ENCODE measurements at regions of chr17 and their contacts with region 1.

Region 1: DNA sequence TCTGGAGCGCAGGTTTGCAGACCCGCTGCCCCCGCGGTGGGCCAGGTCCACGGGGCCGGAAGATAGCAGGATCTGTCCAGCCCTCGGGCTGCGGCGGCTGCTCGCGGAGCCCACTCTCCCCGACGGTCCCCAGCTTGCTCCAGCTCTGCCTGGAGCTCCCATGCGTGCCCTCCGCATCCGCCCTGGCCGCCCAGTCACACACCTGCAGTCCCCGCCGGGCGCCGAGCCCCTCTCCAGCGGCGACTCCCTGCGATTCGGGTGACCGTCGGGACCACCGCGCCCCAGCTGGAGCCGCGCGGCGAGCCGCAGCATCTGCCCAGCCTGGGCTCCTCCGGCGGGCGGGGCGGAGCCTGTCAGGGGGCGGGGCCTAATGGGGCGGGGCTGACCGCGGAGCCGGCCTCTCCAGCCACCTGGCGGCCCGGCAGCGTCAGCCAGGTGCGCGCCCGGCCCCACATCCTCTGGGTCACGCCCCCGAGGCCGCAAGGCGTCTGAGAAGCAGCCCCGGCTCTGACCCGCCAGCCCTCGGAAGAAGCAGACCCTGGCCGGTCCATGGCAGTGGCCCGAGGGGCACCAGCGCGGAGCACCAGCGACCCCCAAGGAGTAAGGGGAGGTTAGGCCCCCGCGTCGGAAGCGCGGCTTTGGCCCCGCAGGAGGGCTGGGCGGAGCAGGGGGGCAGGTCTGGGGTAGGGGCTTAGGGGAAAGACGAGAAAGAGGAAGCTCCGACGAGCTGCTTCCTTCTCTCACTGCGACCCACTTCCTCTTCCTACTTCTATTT is at the start of gene PIK3R5:
- DNase-seq: peak; percentile 24 to 63
- ATAC-seq: peak; percentile 62 to 90 (median 78)
- H3K4me3 ChIP-seq: peak within 1 kb of the TSS in 9 of 10 donors; percentile 2 to 83 (median 41)
- H3K27ac ChIP-seq: peak within 1 kb of the TSS in 8 of 10 donors; percentile 35 to 98 (median 62)
- H3K4me1 ChIP-seq: peaks cover 0 to 38% (median 0%) of the 10 kb centered on the region in 9 donors
- H3K27me3 ChIP-seq: peaks cover 8 to 75% (median 53%) of the 10 kb centered on the region in 7 donors
- CTCF ChIP-seq: peak in 1 of 9 donors; percentile 13
- total RNA-seq, gene PIK3R5: 0.66 to 10.1 (median 2.4) TPM

Region 2: GRCh38 chr17:8900626-8901585 is 64.7 kb before region 1 on chr17:
- intact Hi-C with region 1: loop called in 1 of 10 experiments (anchors 10 kb)
- DNase-seq: no peak
- ATAC-seq: no peak
- H3K4me3 ChIP-seq: no peak overlapping the region
- H3K27ac ChIP-seq: peak overlapping the region in 1 of 10 donors; percentile 51
- H3K4me1 ChIP-seq: peaks cover 0 to 39% (median 0%) of the 10 kb centered on the region in 9 donors
- H3K27me3 ChIP-seq: peaks cover 0 to 37% (median 7%) of the 10 kb centered on the region in 7 donors
- CTCF ChIP-seq: no peak

Region 3: GRCh38 chr17:9009737-9010136 is 44.2 kb after region 1 on chr17:
- intact Hi-C with region 1: no loop called
- DNase-seq: no peak
- ATAC-seq: peak in 1 of 8 donors; percentile 56
- H3K4me3 ChIP-seq: no peak overlapping the region
- H3K27ac ChIP-seq: no peak overlapping the region
- H3K4me1 ChIP-seq: no peaks in the 10 kb centered on the region
- H3K27me3 ChIP-seq: peaks cover under 1 to 62% (median 54%) of the 10 kb centered on the region in 7 donors
- CTCF ChIP-seq: no peak

Region 4: GRCh38 chr17:10729334-10730193 is 1764.0 kb after region 1 on chr17 and contains the start of gene TMEM220:
- intact Hi-C with region 1: no loop called
- DNase-seq: peak; percentile 73 to 86
- ATAC-seq: peak; percentile 96 to 98 (median 97)
- H3K4me3 ChIP-seq: peak within 1 kb of the TSS; percentile 65 to 88 (median 77)
- H3K27ac ChIP-seq: peak within 1 kb of the TSS; percentile 87 to 98 (median 93)
- H3K4me1 ChIP-seq: peaks cover 0 to 13% (median 5%) of the 10 kb centered on the region in 9 donors
- H3K27me3 ChIP-seq: no peaks in the 10 kb centered on the region
- CTCF ChIP-seq: no peak
- total RNA-seq, gene TMEM220: 3.8 to 13.6 (median 7.6) TPM

Measured in heart right ventricle (tissue), 16 donors.